Ascending aorta (tissue), 2 donors: ENCODE measurements at regions of chr1 and their contacts with region 1.

Region 1: GRCh38 chr1:9128520-9129265 is at the start of gene GPR157:
- DNase-seq: peak in 1 of 2 donors; percentile 89
- H3K4me3 ChIP-seq: peak within 1 kb of the TSS; percentile 76 to 86
- H3K27ac ChIP-seq: peak within 1 kb of the TSS; percentile 89 to 96
- H3K4me1 ChIP-seq: peaks cover 2 to 17% of the 10 kb centered on the region in 2 donors
- H3K27me3 ChIP-seq: no peaks in the 10 kb centered on the region
- CTCF ChIP-seq: peak in 1 of 3 experiments; percentile 17
- total RNA-seq, gene GPR157: 7.1 TPM

Region 2: GRCh38 chr1:9234223-9235095 is 105.8 kb after region 1 on chr1 and contains the start of gene H6PD:
- intact Hi-C with region 1: loop called (anchors 5 kb)
- DNase-seq: peak; percentile 45 to 91
- H3K4me3 ChIP-seq: peak within 1 kb of the TSS; percentile 68 to 73
- H3K27ac ChIP-seq: peak within 1 kb of the TSS; percentile 93 to 97
- H3K4me1 ChIP-seq: peaks cover 8 to 46% of the 10 kb centered on the region in 2 donors
- H3K27me3 ChIP-seq: no peaks in the 10 kb centered on the region
- CTCF ChIP-seq: peak; percentile 72 to 96 (median 79)
- total RNA-seq, gene H6PD: 56.8 TPM

Region 3: DNA sequence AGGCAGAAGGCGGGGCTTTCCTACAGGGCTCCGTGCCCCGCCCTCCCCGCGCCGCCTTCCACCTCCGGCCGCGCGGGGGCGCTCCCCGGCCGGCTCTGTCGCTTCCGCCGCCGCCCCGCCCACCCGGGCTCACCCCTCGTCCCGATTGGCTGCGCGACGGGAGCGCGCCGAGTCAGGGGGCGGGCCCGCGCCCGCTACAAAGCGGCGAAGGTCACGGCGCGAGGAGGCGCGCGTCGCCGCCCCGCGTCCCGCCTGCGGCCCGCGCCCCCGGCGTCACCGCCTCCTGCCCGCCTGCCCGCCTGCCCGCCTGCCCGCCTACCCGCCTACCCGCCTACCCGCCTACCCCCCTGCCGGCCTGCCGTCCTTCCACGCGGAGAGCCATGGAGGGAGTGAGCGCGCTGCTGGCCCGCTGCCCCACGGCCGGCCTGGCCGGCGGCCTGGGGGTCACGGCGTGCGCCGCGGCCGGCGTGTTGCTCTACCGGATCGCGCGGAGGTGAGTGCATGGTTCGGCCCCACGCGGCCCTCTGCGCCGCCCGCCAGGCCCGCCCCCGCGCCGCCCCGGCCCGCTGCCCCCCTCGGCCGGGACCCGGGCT is 460.0 kb after region 1 on chr1 and contains the start of gene TMEM201:
- intact Hi-C with region 1: loop called (anchors 5 kb)
- DNase-seq: peak; percentile 56 to 96
- H3K4me3 ChIP-seq: peak within 1 kb of the TSS; percentile 77 to 91
- H3K27ac ChIP-seq: peak within 1 kb of the TSS in 1 of 2 donors; percentile 67
- H3K4me1 ChIP-seq: peaks cover 8 to 10% of the 10 kb centered on the region in 2 donors
- H3K27me3 ChIP-seq: no peaks in the 10 kb centered on the region
- CTCF ChIP-seq: peak in 2 of 3 experiments; percentile 63 to 80
- total RNA-seq, gene TMEM201: 12.8 TPM